ENCODE measurements at regions of chr17 and their contacts with region 1.

Region 1: DNA sequence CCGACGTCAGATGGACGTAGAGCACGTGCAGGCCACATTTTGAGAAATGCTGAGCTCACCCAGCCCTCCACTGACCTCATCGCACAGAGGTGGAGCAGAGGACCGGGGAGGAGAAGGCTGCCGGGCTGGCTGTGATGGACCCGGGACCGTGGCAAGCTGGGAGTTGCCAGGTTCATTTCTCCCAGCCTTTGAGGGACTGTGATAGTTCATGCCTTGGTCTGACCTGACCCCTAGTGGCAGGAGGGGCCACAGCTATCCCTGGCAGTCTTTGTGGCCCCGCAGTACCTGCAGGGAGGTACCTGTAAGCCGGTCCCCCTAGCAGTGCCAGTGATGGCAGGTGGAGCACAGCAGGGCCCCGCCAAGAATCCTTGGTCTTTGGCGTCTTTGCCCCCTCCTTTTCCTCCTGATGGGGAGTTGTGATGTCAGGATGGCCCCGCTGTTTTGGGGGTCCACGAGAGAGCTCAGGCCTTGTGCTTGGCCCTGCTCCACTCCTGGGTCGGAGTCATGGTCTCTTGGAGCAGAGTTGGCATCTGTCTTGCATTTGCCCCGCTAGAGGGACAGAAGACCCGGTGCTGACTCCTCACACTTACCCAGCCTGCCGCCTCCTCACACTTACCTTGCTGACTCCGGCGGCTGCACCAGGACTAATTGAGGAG is 50.4 kb downstream of the OR1D5 start:
- DNase-seq: peak; percentile 74 to 80 (median 76)
- ATAC-seq: peak; percentile 88
- H3K4me3 ChIP-seq: no peak overlapping the region
- H3K27ac ChIP-seq: peak overlapping the region in 1 of 4 donors; percentile 17
- H3K4me1 ChIP-seq: no peaks in the 10 kb centered on the region
- H3K27me3 ChIP-seq: no peaks in the 10 kb centered on the region
- CTCF ChIP-seq: peak; percentile 67 to 87 (median 83)
- POLR2A ChIP-seq: no peak

Region 2: GRCh38 chr17:2828397-2829038 is 184.5 kb before region 1 on chr17:
- intact Hi-C with region 1: loop called (anchors 5 kb)
- DNase-seq: peak; percentile 72 to 81 (median 79)
- ATAC-seq: peak; percentile 82
- H3K4me3 ChIP-seq: no peak overlapping the region
- H3K27ac ChIP-seq: no peak overlapping the region
- H3K4me1 ChIP-seq: no peaks in the 10 kb centered on the region
- H3K27me3 ChIP-seq: no peaks in the 10 kb centered on the region
- CTCF ChIP-seq: peak; percentile 89 to 95 (median 91)
- POLR2A ChIP-seq: no peak

Region 3: GRCh38 chr17:2954898-2955445 is 58.1 kb before region 1 on chr17:
- intact Hi-C with region 1: no loop called
- DNase-seq: peak in 2 of 4 donors; percentile 18 to 59
- ATAC-seq: peak; percentile 87
- H3K4me3 ChIP-seq: no peak overlapping the region
- H3K27ac ChIP-seq: peak overlapping the region; percentile 17 to 75 (median 42)
- H3K4me1 ChIP-seq: peaks cover 9% of the 10 kb centered on the region
- H3K27me3 ChIP-seq: no peaks in the 10 kb centered on the region
- CTCF ChIP-seq: peak in 1 of 7 experiments; percentile 16
- POLR2A ChIP-seq: peak in 1 of 3 donors; percentile 30

Measured in body of pancreas (tissue), 4 donors.